Spleen (tissue), 13 donors: ENCODE measurements at regions of chr17 and their contacts with region 1.

Region 1: GRCh38 chr17:67912656-67913055 is 83.6 kb downstream of the C17orf58 start:
- DNase-seq: no peak
- H3K4me3 ChIP-seq: no peak overlapping the region
- H3K27ac ChIP-seq: no peak overlapping the region
- H3K4me1 ChIP-seq: peaks cover 0 to 15% (median 3%) of the 10 kb centered on the region in 6 donors
- H3K27me3 ChIP-seq: no peaks in the 10 kb centered on the region
- CTCF ChIP-seq: no peak
- POLR2A ChIP-seq: no peak

Region 2: DNA sequence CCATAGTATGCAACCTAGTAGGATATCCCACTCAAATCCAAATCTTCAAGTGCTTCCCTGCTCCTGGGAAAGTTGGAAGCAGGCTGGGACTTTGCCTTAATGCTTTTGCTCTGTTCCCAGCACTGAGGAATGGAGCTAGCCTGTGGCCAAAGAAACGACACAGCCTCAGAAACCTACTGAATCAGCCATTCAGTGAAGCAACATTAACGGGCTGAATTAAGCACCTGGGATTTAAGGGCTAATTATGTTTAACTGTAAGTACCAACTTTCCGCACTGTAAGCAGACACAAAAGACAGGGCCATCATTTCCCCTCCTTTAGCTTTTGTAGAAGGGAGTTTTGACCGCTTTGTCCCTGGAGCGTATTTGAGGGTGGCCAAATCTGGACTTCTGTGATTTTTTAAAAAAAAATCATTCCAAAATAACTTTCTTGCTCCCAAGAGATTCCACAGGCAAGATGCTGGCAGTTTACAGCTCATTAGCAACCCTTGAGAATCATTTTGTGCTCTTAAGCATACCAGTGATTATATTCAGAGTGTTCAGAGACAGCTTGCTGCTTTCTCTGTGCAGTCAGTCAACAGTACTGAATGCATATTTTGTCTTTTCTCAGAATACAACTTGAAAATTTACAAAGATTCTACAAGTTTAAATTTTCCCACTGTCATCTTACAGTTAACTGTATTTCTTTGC is 212.5 kb before region 1 on chr17:
- intact Hi-C with region 1: no loop called
- DNase-seq: no peak
- H3K4me3 ChIP-seq: no peak overlapping the region
- H3K27ac ChIP-seq: no peak overlapping the region
- H3K4me1 ChIP-seq: no peaks in the 10 kb centered on the region
- H3K27me3 ChIP-seq: no peaks in the 10 kb centered on the region
- CTCF ChIP-seq: no peak
- POLR2A ChIP-seq: no peak

Region 3: DNA sequence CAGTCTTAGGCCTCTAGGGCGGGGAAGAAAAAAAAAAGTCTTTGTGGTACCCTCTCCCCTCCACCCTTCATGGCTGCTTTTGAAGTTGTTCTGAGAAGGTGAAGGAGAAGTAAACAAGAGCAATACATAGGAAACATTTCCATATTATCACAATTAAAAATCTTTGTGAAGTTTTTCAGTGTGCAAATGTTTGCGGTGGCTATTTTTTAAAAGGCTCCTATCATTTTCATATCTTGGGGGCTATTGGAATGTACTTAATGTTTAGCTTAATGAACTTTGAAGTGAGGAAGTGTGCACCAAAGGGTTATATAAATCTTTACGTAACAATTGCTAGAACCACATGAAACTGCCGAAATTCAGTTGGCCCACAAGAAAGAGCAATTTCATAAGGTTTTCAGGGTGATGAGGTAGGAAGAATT is 187.3 kb before region 1 on chr17:
- intact Hi-C with region 1: loop called (anchors 10 kb)
- DNase-seq: no peak
- H3K4me3 ChIP-seq: no peak overlapping the region
- H3K27ac ChIP-seq: peak overlapping the region in 1 of 8 donors; percentile 18
- H3K4me1 ChIP-seq: peaks cover 0 to 22% (median 3%) of the 10 kb centered on the region in 6 donors
- H3K27me3 ChIP-seq: no peaks in the 10 kb centered on the region
- CTCF ChIP-seq: no peak
- POLR2A ChIP-seq: no peak

Region 4: DNA sequence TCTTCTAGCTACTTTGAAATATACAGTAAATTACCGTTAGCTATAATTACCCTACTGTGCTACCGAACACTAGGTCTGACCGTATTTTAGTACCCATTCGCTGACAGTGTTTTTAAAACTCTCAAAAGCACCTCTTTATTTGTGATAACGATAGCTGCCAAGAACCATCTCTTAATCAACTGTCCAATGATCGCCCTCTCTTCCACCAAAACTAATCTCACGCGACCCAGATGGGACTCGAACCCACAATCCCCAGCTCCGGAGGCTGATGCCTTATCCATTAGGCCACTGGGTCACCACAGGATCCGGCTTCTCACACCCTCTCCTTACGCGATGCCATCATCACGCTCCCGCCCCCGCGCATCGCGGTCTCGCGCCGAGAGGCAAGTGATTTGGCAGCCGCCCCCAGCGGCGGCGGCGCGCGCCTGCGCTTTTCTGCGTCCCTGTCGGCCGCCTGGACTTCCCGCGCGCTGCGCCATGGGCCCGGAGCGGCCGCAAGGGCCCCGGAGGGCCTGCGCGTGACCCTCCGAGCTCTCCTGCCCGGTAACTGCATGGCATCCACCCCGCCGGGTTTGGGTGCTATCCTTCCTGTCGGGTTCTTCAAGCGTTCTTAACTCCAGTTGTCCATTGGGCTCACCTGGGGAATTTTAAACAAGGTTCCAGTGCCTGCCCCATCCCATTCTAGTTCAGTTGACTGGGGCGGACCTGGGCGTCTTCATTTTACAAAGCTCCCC is 107.2 kb after region 1 on chr17:
- intact Hi-C with region 1: no loop called
- DNase-seq: peak; percentile 98
- H3K4me3 ChIP-seq: peak overlapping the region; percentile 49 to 69 (median 60)
- H3K27ac ChIP-seq: peak overlapping the region; percentile 78 to 88 (median 83)
- H3K4me1 ChIP-seq: peaks cover 0 to 29% (median 11%) of the 10 kb centered on the region in 6 donors
- H3K27me3 ChIP-seq: no peaks in the 10 kb centered on the region
- CTCF ChIP-seq: peak; percentile 51 to 84 (median 74)
- POLR2A ChIP-seq: peak in 1 of 3 donors; percentile 48